Activated naive CD4-positive, alpha-beta T cell treated with anti-CD3 and anti-CD28 coated beads for 36 hours (primary cell): ENCODE measurements at regions of chr6 and their contacts with region 1.

Region 1: DNA sequence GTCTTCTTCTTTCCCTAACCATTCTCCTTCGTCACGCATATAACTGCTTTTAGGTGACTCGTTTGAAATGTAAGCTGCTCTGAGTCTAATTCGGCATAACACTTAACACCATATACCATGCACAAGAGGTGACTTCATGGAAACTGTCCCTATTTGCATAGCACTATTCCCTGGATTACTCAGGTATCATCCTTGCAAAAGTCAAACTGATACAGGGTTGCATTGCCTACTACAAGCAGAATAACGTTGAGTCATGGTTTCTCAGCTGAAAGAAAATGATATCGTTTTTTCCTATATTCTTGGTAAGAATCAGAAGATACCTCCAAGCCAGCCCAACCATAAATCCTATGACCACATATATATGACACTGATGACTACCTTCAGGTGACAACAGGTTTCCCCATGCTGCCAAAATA is 227.5 kb downstream of the ATXN1 start:
- DNase-seq: peak; percentile 22
- H3K4me3 Mint-ChIP-seq: no peak overlapping the region
- H3K27ac Mint-ChIP-seq: no peak overlapping the region
- H3K4me1 Mint-ChIP-seq: peaks cover 21% of the 10 kb centered on the region
- H3K27me3 Mint-ChIP-seq: no peaks in the 10 kb centered on the region

Region 2: DNA sequence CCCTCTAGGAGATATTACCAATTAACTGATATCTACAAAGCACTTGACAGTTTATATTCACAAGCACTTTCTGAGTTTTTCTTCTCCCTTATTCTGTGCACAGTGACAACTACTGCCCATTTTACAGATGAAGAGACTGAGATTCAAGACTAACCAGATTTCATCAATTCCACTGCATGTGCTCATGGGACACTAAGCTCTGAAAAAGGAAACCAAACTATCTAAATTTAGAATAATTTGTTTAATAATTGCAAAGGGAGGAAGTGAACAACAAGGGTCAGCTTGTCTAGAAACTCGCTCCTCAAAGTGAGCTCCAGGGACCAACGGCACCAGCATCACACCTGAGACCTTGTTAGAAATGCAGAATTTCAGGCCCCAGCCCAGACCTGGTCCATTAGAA is 455.7 kb before region 1 on chr6:
- CTCF ChIA-PET with region 1: no interaction called
- intact Hi-C with region 1: no loop called
- DNase-seq: no peak
- H3K4me3 Mint-ChIP-seq: no peak overlapping the region
- H3K27ac Mint-ChIP-seq: no peak overlapping the region
- H3K4me1 Mint-ChIP-seq: no peaks in the 10 kb centered on the region
- H3K27me3 Mint-ChIP-seq: no peaks in the 10 kb centered on the region

Region 3: GRCh38 chr6:16583144-16583762 is 49.5 kb after region 1 on chr6:
- CTCF ChIA-PET with region 1: no interaction called
- intact Hi-C with region 1: no loop called
- DNase-seq: no peak
- H3K4me3 Mint-ChIP-seq: no peak overlapping the region
- H3K27ac Mint-ChIP-seq: no peak overlapping the region
- H3K4me1 Mint-ChIP-seq: no peaks in the 10 kb centered on the region
- H3K27me3 Mint-ChIP-seq: no peaks in the 10 kb centered on the region

Region 4: DNA sequence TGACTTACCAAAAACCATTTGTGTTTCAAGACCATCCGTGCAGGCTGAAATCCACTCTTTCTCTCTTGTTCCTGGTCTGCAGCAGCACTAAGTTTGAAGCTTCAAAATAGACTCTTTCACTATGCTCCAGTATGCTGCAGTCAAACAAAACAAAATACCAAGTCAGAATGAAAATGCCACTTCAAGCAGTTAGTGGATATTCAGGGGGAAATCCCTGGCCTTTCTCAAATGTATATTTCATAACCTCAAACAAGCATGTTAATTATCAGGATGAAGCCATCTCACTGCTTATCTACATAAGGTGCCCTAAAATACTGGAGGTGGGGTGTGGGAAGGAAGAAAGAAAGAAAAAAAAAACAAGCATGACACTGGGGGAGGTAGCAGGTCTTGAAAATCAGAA is 124.0 kb after region 1 on chr6:
- CTCF ChIA-PET with region 1: no interaction called
- intact Hi-C with region 1: loop called (anchors 1 kb)
- DNase-seq: peak; percentile 9
- H3K4me3 Mint-ChIP-seq: peak overlapping the region; percentile 2
- H3K27ac Mint-ChIP-seq: peak overlapping the region; percentile 32
- H3K4me1 Mint-ChIP-seq: peaks cover 43% of the 10 kb centered on the region
- H3K27me3 Mint-ChIP-seq: no peaks in the 10 kb centered on the region